Activated CD4-positive, alpha-beta memory T cell treated with anti-CD3 and anti-CD28 coated beads for 36 hours (primary cell): ENCODE measurements at regions of chr6 and their contacts with region 1.

Region 1: DNA sequence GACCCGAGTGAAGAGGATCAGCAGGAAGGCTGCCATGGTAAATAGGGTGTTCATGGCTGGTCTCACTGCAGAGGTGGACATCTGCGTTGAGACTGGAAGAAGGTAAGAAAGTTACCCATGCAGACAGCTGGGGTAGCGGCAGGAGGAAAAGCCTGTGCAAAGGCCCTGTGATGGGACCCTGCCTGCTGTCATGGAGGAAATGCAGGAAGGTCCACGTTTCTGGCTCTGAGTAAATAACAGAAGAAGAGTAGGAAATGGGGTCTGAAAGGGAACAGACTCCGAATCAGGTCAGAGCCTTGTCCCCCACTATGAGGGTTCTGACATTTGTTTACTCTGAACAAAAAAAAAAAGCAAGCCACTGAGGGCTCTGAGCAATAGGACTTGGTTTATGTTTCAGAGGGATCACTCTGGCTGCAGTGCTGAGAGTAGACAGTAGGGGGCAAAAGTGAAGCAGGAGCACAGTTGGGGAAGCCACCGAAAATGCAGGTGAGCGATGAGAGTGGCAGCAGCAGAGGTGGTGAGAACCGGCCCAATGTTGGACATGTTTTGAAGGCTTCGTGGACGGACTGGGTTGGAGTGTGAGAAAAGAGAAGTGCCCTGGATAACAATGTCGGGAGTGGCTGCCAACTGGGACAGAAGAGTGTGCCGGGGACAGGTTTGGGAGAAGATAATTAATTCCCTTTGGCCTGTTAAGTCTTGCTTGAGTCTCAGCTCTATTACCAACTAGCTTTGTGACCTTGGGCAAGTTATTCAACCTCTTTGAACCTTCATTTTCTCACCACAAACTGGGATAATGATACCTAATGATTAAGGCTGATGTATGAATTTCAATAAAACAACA is 57.9 kb upstream of the MAP7 start:
- DNase-seq: peak; percentile 90
- H3K4me3 Mint-ChIP-seq: no peak overlapping the region
- H3K27ac Mint-ChIP-seq: no peak overlapping the region
- H3K4me1 Mint-ChIP-seq: peaks cover 15% of the 10 kb centered on the region
- H3K27me3 Mint-ChIP-seq: no peaks in the 10 kb centered on the region

Region 2: GRCh38 chr6:136371959-136372358 is 236.2 kb before region 1 on chr6:
- CTCF ChIA-PET with region 1: no interaction called
- POLR2A ChIA-PET with region 1: no interaction called
- intact Hi-C with region 1: no loop called
- DNase-seq: no peak
- H3K4me3 Mint-ChIP-seq: no peak overlapping the region
- H3K27ac Mint-ChIP-seq: no peak overlapping the region
- H3K4me1 Mint-ChIP-seq: no peaks in the 10 kb centered on the region
- H3K27me3 Mint-ChIP-seq: peaks cover 7% of the 10 kb centered on the region

Region 3: GRCh38 chr6:136927292-136927691 is 319.1 kb after region 1 on chr6:
- CTCF ChIA-PET with region 1: no interaction called
- POLR2A ChIA-PET with region 1: no interaction called
- intact Hi-C with region 1: loop called (anchors 10 kb)
- DNase-seq: peak; percentile 39
- H3K4me3 Mint-ChIP-seq: no peak overlapping the region
- H3K27ac Mint-ChIP-seq: no peak overlapping the region
- H3K4me1 Mint-ChIP-seq: peaks cover 9% of the 10 kb centered on the region
- H3K27me3 Mint-ChIP-seq: peaks cover 31% of the 10 kb centered on the region